Activated CD4-positive, alpha-beta T cell treated with anti-CD3 and anti-CD28 coated beads, Interleukin-2, amount 10 ng/mL, durations not matched to agents 24 days and 14 days (primary cell): ENCODE measurements at regions of chr2 and their contacts with region 1.

Region 1: GRCh38 chr2:27123302-27124231 is at the start of gene ABHD1:
- DNase-seq: peak; percentile 93
- H3K4me3 Mint-ChIP-seq: peak within 1 kb of the TSS; percentile 90
- H3K27ac Mint-ChIP-seq: peak within 1 kb of the TSS; percentile 45
- H3K4me1 Mint-ChIP-seq: peaks cover 16% of the 10 kb centered on the region
- H3K27me3 Mint-ChIP-seq: peaks cover 34% of the 10 kb centered on the region
- total RNA-seq, gene ABHD1: 0.23 and 0.28 TPM in 2 replicates

Region 2: GRCh38 chr2:27050281-27050995 is 73.1 kb before region 1 on chr2:
- intact Hi-C with region 1: loop called (anchors 5 kb)
- DNase-seq: peak; percentile 98
- H3K4me3 Mint-ChIP-seq: peak overlapping the region; percentile 90
- H3K27ac Mint-ChIP-seq: peak overlapping the region; percentile 99
- H3K4me1 Mint-ChIP-seq: peaks cover 22% of the 10 kb centered on the region
- H3K27me3 Mint-ChIP-seq: peaks cover 5% of the 10 kb centered on the region

Region 3: GRCh38 chr2:27133905-27134780 is 10.6 kb after region 1 on chr2 and contains the start of gene PREB:
- intact Hi-C with region 1: loop called (anchors 1 kb)
- DNase-seq: peak; percentile 100
- H3K4me3 Mint-ChIP-seq: peak within 1 kb of the TSS; percentile 93
- H3K27ac Mint-ChIP-seq: peak within 1 kb of the TSS; percentile 98
- H3K4me1 Mint-ChIP-seq: peaks cover 16% of the 10 kb centered on the region
- H3K27me3 Mint-ChIP-seq: no peaks in the 10 kb centered on the region
- total RNA-seq, gene PREB: 85.4 and 88.3 TPM in 2 replicates